ENCODE measurements at regions of chr2 and their contacts with region 1.

Region 1: GRCh38 chr2:74507145-74507925 is at the start of gene PCGF1:
- DNase-seq: peak; percentile 93 to 99 (median 98)

Region 2: GRCh38 chr2:74406035-74406434 is 101.3 kb before region 1 on chr2:
- intact Hi-C with region 1: no loop called
- DNase-seq: no peak

Region 3: GRCh38 chr2:74529357-74530238 is 22.3 kb after region 1 on chr2 and contains the starts of genes AUP1 and HTRA2:
- intact Hi-C with region 1: loop called (anchors 2 kb)
- DNase-seq: peak; percentile 96 to 99 (median 98)

Region 4: GRCh38 chr2:74553892-74554645 is 46.7 kb after region 1 on chr2 and contains the start of gene LOXL3:
- intact Hi-C with region 1: no loop called
- DNase-seq: peak in 39 of 42 donors; percentile 16 to 81 (median 60)

Measured in head of caudate nucleus (tissue), 42 donors.